ENCODE measurements at regions of chr12 and their contacts with region 1.

Region 1: DNA sequence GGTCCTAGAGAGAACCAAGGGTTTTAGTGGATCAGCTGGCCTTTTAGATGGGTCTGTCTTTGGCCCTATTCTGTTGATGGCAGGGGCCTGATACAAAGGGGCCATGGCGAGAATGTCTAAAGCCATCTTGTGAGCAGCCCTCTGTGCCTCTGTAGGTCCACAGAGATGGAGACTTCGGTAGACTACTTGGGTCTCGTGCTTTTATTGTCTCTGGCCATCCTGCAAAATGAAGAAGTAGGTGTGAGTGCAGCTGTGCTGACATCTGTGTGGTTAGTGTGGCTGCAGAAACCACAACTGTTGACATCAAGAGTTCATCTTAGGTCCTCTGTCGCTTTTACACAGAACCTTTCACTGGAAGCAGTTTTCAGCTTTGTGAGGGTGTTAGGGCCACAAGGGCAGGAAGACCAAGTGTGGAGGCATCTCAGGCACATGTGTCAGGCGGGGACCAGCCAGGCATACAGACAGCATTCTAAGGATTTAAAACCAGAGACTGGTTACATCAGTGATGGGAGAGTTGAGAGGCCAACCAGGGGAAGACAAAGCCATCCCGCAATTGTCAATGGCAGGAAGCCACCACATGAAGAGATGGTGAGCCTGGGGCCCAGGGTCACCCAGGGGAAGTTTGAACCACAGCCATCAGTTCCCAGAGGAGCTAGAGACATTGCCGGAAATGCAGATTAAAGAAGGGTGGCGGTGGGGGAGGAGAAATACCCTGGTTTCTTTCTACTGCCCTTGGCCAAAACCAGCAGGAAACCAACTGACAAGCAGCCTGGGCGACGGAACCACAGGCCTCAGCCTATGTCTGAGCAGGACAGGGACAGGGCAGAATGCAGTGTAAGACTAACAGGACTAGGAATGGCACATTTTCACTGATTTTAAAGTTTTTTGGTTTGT is 13.0 kb upstream of the TPCN1 start:
- DNase-seq: peak; percentile 28
- H3K4me3 ChIP-seq: no peak overlapping the region
- H3K27ac ChIP-seq: peak overlapping the region in 3 of 4 donors; percentile 9 to 70 (median 65)
- H3K4me1 ChIP-seq: peaks cover 5 to 39% (median 11%) of the 10 kb centered on the region in 3 donors
- H3K27me3 ChIP-seq: no peaks in the 10 kb centered on the region
- CTCF ChIP-seq: no peak
- POLR2A ChIP-seq: peak in 1 of 4 donors; percentile 11

Region 2: GRCh38 chr12:113048716-113049127 is 159.6 kb before region 1 on chr12:
- intact Hi-C with region 1: no loop called
- DNase-seq: no peak
- H3K4me3 ChIP-seq: no peak overlapping the region
- H3K27ac ChIP-seq: no peak overlapping the region
- H3K4me1 ChIP-seq: no peaks in the 10 kb centered on the region
- H3K27me3 ChIP-seq: peaks cover 0 to 76% (median 0%) of the 10 kb centered on the region in 4 donors
- CTCF ChIP-seq: peak; percentile 75 to 86 (median 84)
- POLR2A ChIP-seq: no peak

Region 3: DNA sequence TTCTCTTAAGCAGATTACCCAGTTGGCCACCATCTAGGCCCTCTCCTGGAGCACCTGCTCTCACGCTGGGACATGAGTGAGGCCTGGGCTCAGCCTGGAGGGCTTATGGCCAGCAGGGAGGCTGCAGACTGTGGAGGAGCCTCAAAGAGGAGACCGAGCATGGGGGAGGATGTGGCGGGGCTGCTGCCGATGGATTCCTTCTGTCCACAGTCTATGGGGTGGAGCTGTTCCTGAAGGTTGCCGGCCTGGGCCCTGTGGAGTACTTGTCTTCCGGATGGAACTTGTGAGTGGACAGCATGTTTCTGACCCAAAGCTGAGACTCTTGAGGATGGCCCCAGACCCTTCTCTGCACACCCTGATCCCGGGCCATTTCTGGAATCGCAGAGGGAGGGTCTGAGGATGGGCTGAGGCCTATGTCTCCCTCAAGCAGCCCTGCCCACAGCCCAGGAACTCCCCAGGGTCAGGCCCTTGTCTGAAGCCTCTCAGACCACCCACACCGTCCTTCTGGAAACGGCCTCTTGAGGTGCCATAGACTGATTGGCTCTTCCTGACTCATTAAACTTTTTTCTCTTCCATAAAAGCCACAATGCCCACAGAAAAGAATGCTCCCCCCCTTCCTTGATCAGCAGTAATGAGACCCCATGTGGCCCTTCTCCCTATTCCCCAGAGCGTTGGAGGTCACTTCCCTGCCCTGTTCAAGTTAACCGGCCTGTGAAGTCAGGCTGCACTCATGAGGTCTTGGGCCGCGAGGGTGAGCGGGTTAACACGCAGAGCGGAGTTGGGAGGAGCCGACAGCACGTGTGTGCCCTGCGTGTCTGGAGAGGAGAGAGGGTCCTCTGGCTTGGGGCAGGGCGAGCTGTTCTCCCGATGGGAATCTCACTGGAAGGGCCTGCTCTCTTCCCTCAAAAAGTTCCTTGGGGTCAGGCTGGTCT is 77.7 kb after region 1 on chr12:
- intact Hi-C with region 1: no loop called
- DNase-seq: no peak
- H3K4me3 ChIP-seq: no peak overlapping the region
- H3K27ac ChIP-seq: no peak overlapping the region
- H3K4me1 ChIP-seq: no peaks in the 10 kb centered on the region
- H3K27me3 ChIP-seq: no peaks in the 10 kb centered on the region
- CTCF ChIP-seq: no peak
- POLR2A ChIP-seq: no peak

Region 4: GRCh38 chr12:113422030-113422885 is 214.0 kb after region 1 on chr12 and contains the start of gene SDSL:
- intact Hi-C with region 1: loop called (anchors 10 kb)
- DNase-seq: no peak
- H3K4me3 ChIP-seq: peak within 1 kb of the TSS; percentile 13 to 61 (median 40)
- H3K27ac ChIP-seq: peak within 1 kb of the TSS; percentile 21 to 73 (median 58)
- H3K4me1 ChIP-seq: peaks cover 8 to 24% (median 8%) of the 10 kb centered on the region in 3 donors
- H3K27me3 ChIP-seq: peaks cover 0 to 14% (median 0%) of the 10 kb centered on the region in 4 donors
- CTCF ChIP-seq: no peak
- POLR2A ChIP-seq: peak in 1 of 4 donors; percentile 48
- total RNA-seq, gene SDSL: 0.48 to 3.1 (median 1.5) TPM in 3 of 4 donors, not detected in the other